ENCODE measurements at regions of chr17 and their contacts with region 1.

Region 1: GRCh38 chr17:33769066-33769465 is 476.0 kb upstream of the ASIC2 start:
- DNase-seq: no peak
- H3K4me3 ChIP-seq: no peak overlapping the region
- H3K27ac ChIP-seq: no peak overlapping the region
- H3K4me1 ChIP-seq: no peaks in the 10 kb centered on the region
- H3K27me3 ChIP-seq: no peaks in the 10 kb centered on the region
- CTCF ChIP-seq: no peak
- POLR2A ChIP-seq: no peak

Region 2: DNA sequence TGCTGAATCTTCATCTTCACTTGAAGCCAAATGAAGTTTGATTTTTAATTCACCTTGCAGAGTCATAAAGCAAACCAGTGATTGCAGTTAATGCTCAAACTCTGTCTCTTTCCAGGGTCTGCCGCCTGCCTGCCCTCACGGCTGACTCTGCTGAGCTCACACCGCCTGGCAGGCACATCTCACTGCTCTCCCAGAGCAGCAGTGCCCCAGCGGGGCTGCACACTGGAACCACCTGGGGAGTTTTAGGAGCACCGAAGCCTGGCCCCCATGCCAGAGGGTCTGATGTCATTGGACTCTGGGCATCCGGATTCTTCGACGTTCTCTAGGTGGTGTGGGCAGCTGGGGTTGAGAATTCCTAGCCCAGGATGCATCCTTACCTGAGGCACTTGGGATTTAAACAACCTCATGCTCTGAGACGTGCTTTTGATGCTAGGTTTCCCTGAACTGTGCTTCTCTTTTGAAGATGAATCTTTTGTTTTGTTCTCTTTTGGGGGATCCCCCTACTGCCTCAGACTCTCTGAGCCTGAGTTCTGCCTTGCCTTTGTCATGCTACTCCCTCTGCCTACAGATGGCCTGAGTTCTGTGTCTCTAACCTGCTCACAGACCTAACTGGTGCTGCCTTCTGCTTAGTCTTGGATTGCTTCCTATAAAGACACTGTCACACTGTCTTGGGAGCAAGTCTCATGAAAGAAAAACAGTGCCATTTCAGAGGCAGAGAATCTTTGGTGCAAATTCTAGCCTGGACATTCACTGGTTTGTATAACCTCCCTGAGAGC is 48.0 kb after region 1 on chr17:
- intact Hi-C with region 1: loop called (anchors 2 kb)
- DNase-seq: no peak
- H3K4me3 ChIP-seq: no peak overlapping the region
- H3K27ac ChIP-seq: no peak overlapping the region
- H3K4me1 ChIP-seq: no peaks in the 10 kb centered on the region
- H3K27me3 ChIP-seq: peaks cover 0 to 32% of the 10 kb centered on the region in 2 donors
- CTCF ChIP-seq: no peak
- POLR2A ChIP-seq: no peak